ENCODE measurements at regions of chr11 and their contacts with region 1.

Region 1: GRCh38 chr11:8870411-8871170 is 40.4 kb upstream of the AKIP1 start:
- DNase-seq: peak; percentile 56 to 76 (median 69)
- ATAC-seq: peak; percentile 32 to 87 (median 74)
- H3K4me3 ChIP-seq: peak overlapping the region; percentile 43 to 97 (median 83)
- H3K27ac ChIP-seq: peak overlapping the region; percentile 43 to 94 (median 84)
- H3K4me1 ChIP-seq: peaks cover 0 to 55% (median 15%) of the 10 kb centered on the region in 12 donors
- H3K27me3 ChIP-seq: peaks cover 0 to 30% (median 0%) of the 10 kb centered on the region in 9 donors
- CTCF ChIP-seq: peak in 1 of 12 donors; percentile 23
- POLR2A ChIP-seq: no peak

Region 2: GRCh38 chr11:8682303-8683114 is 188.1 kb before region 1 on chr11 and contains the starts of genes RPL27A and TRIM66:
- intact Hi-C with region 1: loop called in 3 of 10 experiments (anchors 5 to 10 kb)
- DNase-seq: peak; percentile 99
- ATAC-seq: peak; percentile 97 to 99 (median 98)
- H3K4me3 ChIP-seq: peak within 1 kb of the TSS; percentile 58 to 100 (median 90)
- H3K27ac ChIP-seq: peak within 1 kb of the TSS; percentile 91 to 98 (median 96)
- H3K4me1 ChIP-seq: peaks cover 0 to 34% (median 22%) of the 10 kb centered on the region in 12 donors
- H3K27me3 ChIP-seq: no peaks in the 10 kb centered on the region
- CTCF ChIP-seq: peak in 6 of 12 donors; percentile 7 to 26 (median 13)
- POLR2A ChIP-seq: peak; percentile 51 to 97
- total RNA-seq, gene RPL27A: 299 to 597 (median 438) TPM
- total RNA-seq, gene TRIM66: 0.71 to 10.1 (median 4.1) TPM

Region 3: GRCh38 chr11:8688414-8689362 is 181.9 kb before region 1 on chr11:
- intact Hi-C with region 1: loop called in 3 of 10 experiments (anchors 5 to 10 kb)
- DNase-seq: peak; percentile 94 to 97 (median 96)
- ATAC-seq: peak; percentile 97 to 99 (median 98)
- H3K4me3 ChIP-seq: peak overlapping the region; percentile 38 to 75 (median 66)
- H3K27ac ChIP-seq: peak overlapping the region; percentile 45 to 96 (median 88)
- H3K4me1 ChIP-seq: peaks cover 0 to 44% (median 22%) of the 10 kb centered on the region in 12 donors
- H3K27me3 ChIP-seq: no peaks in the 10 kb centered on the region
- CTCF ChIP-seq: peak in 5 of 12 donors; percentile 17 to 53 (median 49)
- POLR2A ChIP-seq: peak in 1 of 2 donors; percentile 71

Region 4: GRCh38 chr11:8728563-8728962 is 142.0 kb before region 1 on chr11:
- intact Hi-C with region 1: loop called in 1 of 10 experiments (anchors 5 kb)
- DNase-seq: no peak
- ATAC-seq: peak in 2 of 4 donors; percentile 17 to 20
- H3K4me3 ChIP-seq: no peak overlapping the region
- H3K27ac ChIP-seq: peak overlapping the region in 6 of 12 donors; percentile 12 to 95 (median 45)
- H3K4me1 ChIP-seq: peaks cover 0 to 66% (median 49%) of the 10 kb centered on the region in 12 donors
- H3K27me3 ChIP-seq: no peaks in the 10 kb centered on the region
- CTCF ChIP-seq: no peak
- POLR2A ChIP-seq: no peak

Region 5: DNA sequence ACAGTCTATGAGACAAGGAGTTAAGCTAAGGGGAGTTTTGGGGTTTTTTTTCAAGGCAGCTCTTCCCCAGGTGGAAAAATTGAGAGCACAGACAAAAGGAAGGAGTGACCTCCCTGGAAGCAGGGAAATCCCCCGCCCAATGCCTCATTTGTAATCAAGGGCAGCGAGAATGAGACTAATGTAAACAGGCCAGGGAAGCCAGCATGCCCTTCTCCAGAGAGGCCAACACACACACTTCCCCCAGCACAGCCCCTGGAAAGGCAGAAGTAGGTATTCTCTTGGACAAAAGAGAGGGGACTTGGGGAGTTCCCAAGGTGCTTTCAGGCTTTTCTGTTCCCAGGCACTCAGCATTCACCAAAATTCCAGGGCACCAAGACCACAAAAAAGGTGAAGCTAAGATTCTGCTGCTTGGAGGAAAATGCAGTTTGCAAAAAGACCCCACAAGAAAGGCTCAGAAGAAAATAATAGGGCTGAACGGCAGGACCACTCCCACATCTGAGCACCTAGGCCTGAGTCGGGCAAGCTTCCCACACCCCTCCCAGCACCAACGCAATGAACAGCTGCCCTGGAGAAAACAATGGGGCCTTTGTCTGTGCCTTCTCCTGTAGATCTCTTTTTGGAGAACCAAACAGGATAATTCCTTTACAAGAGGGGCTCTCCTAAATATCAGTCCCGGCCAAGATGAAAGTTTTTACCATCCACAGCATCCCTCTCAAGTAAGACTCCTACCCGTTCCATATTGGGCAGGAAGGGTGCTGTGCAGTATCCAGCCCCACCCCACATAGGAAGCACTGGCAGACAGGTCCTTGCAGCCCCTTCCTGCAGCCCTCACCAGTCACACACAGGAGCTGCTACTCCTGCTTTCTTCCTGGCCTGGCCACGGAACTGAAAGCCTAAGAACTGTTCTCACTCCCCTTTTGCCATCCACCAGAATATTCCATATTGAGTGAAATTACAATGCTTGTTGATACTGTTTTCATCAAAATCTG is 30.3 kb before region 1 on chr11:
- intact Hi-C with region 1: loop called in 2 of 10 experiments (anchors 2 to 5 kb)
- DNase-seq: peak in 3 of 5 donors; percentile 32 to 40 (median 37)
- ATAC-seq: peak in 3 of 4 donors; percentile 23 to 57 (median 48)
- H3K4me3 ChIP-seq: no peak overlapping the region
- H3K27ac ChIP-seq: peak overlapping the region in 11 of 12 donors; percentile 24 to 75 (median 59)
- H3K4me1 ChIP-seq: peaks cover 0 to 38% (median 29%) of the 10 kb centered on the region in 12 donors
- H3K27me3 ChIP-seq: no peaks in the 10 kb centered on the region
- CTCF ChIP-seq: no peak
- POLR2A ChIP-seq: no peak

Region 6: GRCh38 chr11:8911029-8911826 is 40.6 kb after region 1 on chr11 and contains the start of gene AKIP1:
- intact Hi-C with region 1: loop called in 5 of 10 experiments (anchors 1 to 5 kb)
- DNase-seq: peak; percentile 97 to 98 (median 98)
- ATAC-seq: peak; percentile 94 to 97 (median 96)
- H3K4me3 ChIP-seq: peak within 1 kb of the TSS; percentile 40 to 96 (median 85)
- H3K27ac ChIP-seq: peak within 1 kb of the TSS; percentile 80 to 98 (median 94)
- H3K4me1 ChIP-seq: peaks cover 0 to 52% (median 25%) of the 10 kb centered on the region in 12 donors
- H3K27me3 ChIP-seq: no peaks in the 10 kb centered on the region
- CTCF ChIP-seq: no peak
- POLR2A ChIP-seq: peak in 1 of 2 donors; percentile 74
- total RNA-seq, gene AKIP1: 21.6 to 39.9 (median 27.4) TPM